AG04450 (cell line): ENCODE measurements at regions of chr2 and their contacts with region 1.

Region 1: DNA sequence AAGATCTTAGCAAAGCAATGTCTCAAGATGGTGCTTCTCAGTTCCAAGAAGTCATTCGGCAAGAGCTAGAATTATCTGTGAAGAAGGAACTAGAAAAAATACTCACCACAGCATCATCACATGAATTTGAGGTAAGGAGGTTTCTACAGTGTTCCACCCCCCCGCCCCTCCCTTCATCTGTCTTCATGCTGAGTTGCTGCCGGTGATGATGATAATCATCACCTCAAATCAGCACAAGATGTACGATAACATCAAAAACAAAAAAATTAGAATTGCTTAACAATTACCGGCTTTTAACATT is 14.6 kb downstream of the UGP2 start:
- DNase-seq: no peak
- H3K4me3 ChIP-seq: no peak overlapping the region
- H3K27ac ChIP-seq: no peak overlapping the region
- H3K27me3 ChIP-seq: no peaks in the 10 kb centered on the region
- CTCF ChIP-seq: no peak

Region 2: DNA sequence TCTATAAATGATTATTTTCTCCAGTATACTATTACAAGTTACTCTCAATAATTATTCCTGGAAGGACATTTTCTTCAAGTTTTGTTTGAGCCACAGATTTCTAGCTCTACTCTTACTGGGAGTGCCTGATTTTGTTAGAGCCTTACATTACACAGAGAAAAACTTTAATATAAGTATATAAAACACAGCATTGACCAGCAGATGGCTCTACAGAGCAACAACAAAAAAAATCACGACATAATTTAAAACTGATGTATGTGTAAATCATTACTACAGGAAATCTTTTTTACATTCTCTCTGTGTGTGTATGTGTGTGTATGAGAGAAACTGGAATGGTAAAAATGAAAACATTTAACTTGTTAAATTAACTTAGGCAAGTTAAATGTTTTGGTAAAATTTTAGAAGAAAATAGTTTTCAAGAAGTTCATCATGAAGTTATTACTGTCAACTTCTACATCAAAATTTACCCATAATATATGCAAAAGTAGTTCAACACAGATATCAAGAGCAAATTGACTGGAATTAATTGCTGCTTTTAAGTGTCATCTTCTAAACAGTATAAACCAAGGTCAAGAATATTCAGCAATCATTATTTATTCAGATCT is 164.1 kb before region 1 on chr2:
- CTCF ChIA-PET with region 1: interaction called, 103 read pairs
- POLR2A ChIA-PET with region 1: no interaction called
- DNase-seq: no peak
- H3K4me3 ChIP-seq: no peak overlapping the region
- H3K27ac ChIP-seq: no peak overlapping the region
- H3K27me3 ChIP-seq: no peaks in the 10 kb centered on the region
- CTCF ChIP-seq: peak; percentile 62